ENCODE measurements at regions of chr2 and their contacts with region 1.

Region 1: GRCh38 chr2:229825476-229825875 is 96.3 kb downstream of the TRIP12 start:
- DNase-seq: no peak
- H3K4me3 Mint-ChIP-seq: no peak overlapping the region
- H3K27ac Mint-ChIP-seq: no peak overlapping the region
- H3K4me1 Mint-ChIP-seq: peaks cover 24% of the 10 kb centered on the region
- H3K27me3 Mint-ChIP-seq: no peaks in the 10 kb centered on the region

Region 2: GRCh38 chr2:229852565-229852964 is 27.1 kb after region 1 on chr2:
- intact Hi-C with region 1: loop called (anchors 1 kb)
- DNase-seq: peak; percentile 82
- H3K4me3 Mint-ChIP-seq: no peak overlapping the region
- H3K27ac Mint-ChIP-seq: no peak overlapping the region
- H3K4me1 Mint-ChIP-seq: peaks cover 39% of the 10 kb centered on the region
- H3K27me3 Mint-ChIP-seq: no peaks in the 10 kb centered on the region